H1 (cell line): ENCODE measurements at regions of chr3 and their contacts with region 1.

Region 1: GRCh38 chr3:55180936-55181535 is 253.2 kb upstream of the LRTM1 start:
- DNase-seq: peak in 1 of 2 experiments; percentile 50
- H3K4me3 ChIP-seq: no peak overlapping the region
- H3K27ac ChIP-seq: no peak overlapping the region
- H3K4me1 ChIP-seq: peaks cover 0 to 3% (median 0%) of the 10 kb centered on the region in 4 experiments; a peak in 1 of 7 replicates
- H3K27me3 ChIP-seq: no peaks in the 10 kb centered on the region
- CTCF ChIP-seq: peak in 2 of 3 experiments; percentile 31 to 64; a peak in 2 of 4 replicates
- EP300 ChIP-seq: no peak
- POLR2A ChIP-seq: no peak
- RAD21 ChIP-seq: peak; percentile 39 to 47

Region 2: DNA sequence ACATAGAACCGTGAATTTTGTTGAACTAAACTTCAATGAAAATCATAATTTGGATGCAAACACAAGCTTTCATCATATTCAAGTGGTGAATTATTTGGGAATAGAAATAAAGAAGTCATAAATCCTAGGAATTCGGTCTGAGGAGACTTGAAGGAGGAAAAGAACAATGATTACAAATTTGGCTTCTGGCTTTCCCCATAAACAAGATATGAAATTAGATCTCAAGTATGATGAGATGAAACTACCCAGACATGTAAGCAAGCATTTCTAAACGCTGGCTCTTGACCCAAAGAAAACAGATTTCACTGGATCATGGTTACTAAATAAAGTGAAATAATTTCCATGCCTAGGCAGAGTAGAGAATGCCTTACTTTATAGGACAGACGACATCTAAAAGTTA is 106.2 kb before region 1 on chr3:
- CTCF ChIA-PET with region 1: no interaction called
- POLR2A ChIA-PET with region 1: no interaction called
- DNase-seq: no peak
- H3K4me3 ChIP-seq: no peak overlapping the region
- H3K27ac ChIP-seq: no peak overlapping the region
- H3K4me1 ChIP-seq: no peaks in the 10 kb centered on the region
- H3K27me3 ChIP-seq: no peaks in the 10 kb centered on the region
- CTCF ChIP-seq: no peak
- EP300 ChIP-seq: no peak
- POLR2A ChIP-seq: no peak
- RAD21 ChIP-seq: no peak

Region 3: DNA sequence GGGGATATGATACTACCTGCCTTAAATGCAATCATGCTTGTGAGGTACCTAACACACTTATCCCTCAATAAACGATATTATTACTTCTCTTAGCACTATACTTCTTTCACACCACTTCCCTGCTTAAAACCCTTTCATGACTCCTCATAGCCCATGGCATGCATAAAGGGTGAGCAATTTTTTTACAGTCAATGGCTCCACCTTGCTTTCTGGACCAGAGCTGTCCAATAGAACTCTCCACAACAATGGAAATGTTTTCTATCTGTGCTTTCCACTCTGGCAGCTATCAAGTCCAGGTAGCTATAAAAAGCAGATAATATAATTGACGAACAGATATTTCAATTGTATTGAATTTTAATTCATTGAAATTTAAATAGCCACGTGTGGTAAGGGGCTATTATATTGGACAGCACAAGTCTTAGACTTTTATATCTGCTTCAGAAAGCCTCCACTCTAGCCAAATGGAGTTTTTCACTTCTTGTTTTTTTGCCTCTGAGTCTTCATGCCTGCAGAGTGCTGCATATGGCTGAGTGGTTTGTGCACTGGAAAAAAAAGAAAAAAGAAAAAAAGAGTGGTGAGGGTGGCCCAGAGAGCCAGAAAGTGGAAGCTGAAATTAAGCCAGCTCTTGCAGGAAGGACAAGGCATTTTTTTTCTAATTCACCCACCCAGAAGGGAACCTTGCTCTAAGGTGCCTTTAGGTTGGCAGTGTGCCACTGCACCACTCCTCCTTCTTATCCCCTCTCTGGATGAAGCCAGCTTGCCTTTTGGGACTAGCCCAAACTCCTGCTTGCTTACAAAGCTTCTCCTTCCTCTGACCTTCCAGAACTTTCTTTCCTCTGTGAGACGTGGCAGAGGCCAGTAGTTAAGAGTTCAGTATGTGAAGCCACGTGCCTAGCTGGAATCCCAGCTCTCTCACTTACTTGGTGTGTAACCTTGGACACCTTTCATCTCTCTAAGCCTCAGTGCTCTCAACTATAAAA is 14.2 kb before region 1 on chr3:
- CTCF ChIA-PET with region 1: interaction called, 14 read pairs
- POLR2A ChIA-PET with region 1: no interaction called
- DNase-seq: no peak
- H3K4me3 ChIP-seq: no peak overlapping the region
- H3K27ac ChIP-seq: no peak overlapping the region
- H3K4me1 ChIP-seq: no peaks in the 10 kb centered on the region
- H3K27me3 ChIP-seq: no peaks in the 10 kb centered on the region
- CTCF ChIP-seq: no peak
- EP300 ChIP-seq: no peak
- POLR2A ChIP-seq: no peak
- RAD21 ChIP-seq: 0 out of 4 replicates have a peak, but pooled peaks of 1 of the 2 experiments have one; percentile 5

Region 4: GRCh38 chr3:55191911-55192787 is 11.1 kb after region 1 on chr3:
- CTCF ChIA-PET with region 1: interaction called, 10 read pairs
- POLR2A ChIA-PET with region 1: no interaction called
- DNase-seq: no peak
- H3K4me3 ChIP-seq: no peak overlapping the region
- H3K27ac ChIP-seq: no peak overlapping the region
- H3K4me1 ChIP-seq: no peaks in the 10 kb centered on the region; a peak in 1 of 7 replicates
- H3K27me3 ChIP-seq: no peaks in the 10 kb centered on the region
- CTCF ChIP-seq: no peak
- EP300 ChIP-seq: no peak
- POLR2A ChIP-seq: no peak
- RAD21 ChIP-seq: no peak

Region 5: DNA sequence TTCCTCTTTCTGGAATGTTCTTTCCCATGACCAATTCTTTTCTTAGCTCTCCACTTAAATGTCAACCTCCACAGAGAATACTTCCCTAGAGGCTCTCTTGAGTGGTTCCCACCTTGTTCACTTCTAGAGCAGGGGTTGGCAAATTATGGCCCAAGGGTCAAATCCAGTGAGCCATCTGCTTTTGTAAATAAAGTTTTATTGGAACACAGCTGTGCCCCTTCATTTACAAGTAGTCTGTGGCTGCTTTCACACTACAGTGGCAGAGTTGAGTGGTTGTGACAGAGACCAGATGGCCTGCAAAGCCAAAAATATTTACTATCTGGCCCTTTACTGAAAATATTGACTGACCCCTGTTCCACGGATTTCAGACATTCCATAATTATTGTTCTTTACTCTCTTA is 139.9 kb after region 1 on chr3:
- CTCF ChIA-PET with region 1: no interaction called
- POLR2A ChIA-PET with region 1: no interaction called
- DNase-seq: no peak
- H3K4me3 ChIP-seq: no peak overlapping the region
- H3K27ac ChIP-seq: no peak overlapping the region
- H3K4me1 ChIP-seq: no peaks in the 10 kb centered on the region
- H3K27me3 ChIP-seq: peaks cover 0 to 1% (median 0%) of the 10 kb centered on the region in 4 experiments; a peak in 1 of 7 replicates
- CTCF ChIP-seq: no peak
- EP300 ChIP-seq: no peak
- POLR2A ChIP-seq: no peak
- RAD21 ChIP-seq: no peak